ENCODE measurements at regions of chr12 and their contacts with region 1.

Region 1: DNA sequence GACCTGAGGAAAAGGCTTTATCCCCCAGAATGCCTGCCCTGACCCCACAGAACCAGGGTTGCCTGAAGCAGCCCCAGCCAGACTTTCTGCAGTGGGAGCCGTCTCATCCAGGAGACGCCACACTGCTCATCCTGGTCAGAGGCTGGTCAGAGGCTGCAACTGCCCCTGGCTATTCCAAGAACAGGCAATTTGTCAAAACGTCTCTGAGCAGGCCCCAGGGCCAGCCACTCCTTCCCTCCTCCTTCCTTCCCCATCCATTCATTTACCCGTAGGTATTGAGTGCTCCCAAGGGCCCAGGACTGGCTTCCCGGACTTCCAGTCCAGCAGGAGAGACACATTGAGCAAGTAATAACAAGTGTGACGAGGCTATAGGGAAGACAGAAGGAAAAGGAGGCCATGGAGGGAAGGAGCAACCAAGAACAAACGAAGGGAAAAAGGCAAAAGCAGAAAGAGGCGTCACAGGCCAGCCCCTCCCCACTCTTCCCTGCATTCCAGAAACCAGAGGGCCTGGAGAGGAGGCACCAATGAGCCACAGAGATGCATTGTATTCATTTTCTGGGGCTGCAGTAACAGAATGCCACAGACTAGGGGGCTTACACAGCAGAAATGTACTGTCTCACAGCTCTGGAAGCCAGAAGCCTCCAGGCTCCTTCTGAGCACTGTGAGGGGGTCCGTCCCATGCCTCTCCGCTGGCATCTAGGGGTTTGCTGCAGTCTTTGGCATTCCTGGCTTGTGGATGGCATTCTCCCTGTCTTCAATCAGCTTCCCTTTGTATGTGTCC is 21.0 kb upstream of the CD9 start:
- DNase-seq: peak in 1 of 5 donors; percentile 68
- H3K4me3 ChIP-seq: peak overlapping the region in 1 of 3 donors; percentile 11
- H3K27ac ChIP-seq: peak overlapping the region; percentile 23 to 65
- H3K4me1 ChIP-seq: peaks cover 0 to 44% (median 11%) of the 10 kb centered on the region in 3 donors
- H3K27me3 ChIP-seq: no peaks in the 10 kb centered on the region
- CTCF ChIP-seq: no peak

Region 2: GRCh38 chr12:6062757-6063735 is 116.1 kb before region 1 on chr12:
- intact Hi-C with region 1: loop called (anchors 10 kb)
- DNase-seq: peak in 4 of 5 donors; percentile 63 to 84 (median 73)
- H3K4me3 ChIP-seq: no peak overlapping the region
- H3K27ac ChIP-seq: no peak overlapping the region
- H3K4me1 ChIP-seq: peaks cover 2 to 6% (median 4%) of the 10 kb centered on the region in 3 donors
- H3K27me3 ChIP-seq: no peaks in the 10 kb centered on the region
- CTCF ChIP-seq: peak; percentile 90

Measured in kidney (tissue), 22 donors.